ENCODE measurements at regions of chr1 and their contacts with region 1.

Region 1: DNA sequence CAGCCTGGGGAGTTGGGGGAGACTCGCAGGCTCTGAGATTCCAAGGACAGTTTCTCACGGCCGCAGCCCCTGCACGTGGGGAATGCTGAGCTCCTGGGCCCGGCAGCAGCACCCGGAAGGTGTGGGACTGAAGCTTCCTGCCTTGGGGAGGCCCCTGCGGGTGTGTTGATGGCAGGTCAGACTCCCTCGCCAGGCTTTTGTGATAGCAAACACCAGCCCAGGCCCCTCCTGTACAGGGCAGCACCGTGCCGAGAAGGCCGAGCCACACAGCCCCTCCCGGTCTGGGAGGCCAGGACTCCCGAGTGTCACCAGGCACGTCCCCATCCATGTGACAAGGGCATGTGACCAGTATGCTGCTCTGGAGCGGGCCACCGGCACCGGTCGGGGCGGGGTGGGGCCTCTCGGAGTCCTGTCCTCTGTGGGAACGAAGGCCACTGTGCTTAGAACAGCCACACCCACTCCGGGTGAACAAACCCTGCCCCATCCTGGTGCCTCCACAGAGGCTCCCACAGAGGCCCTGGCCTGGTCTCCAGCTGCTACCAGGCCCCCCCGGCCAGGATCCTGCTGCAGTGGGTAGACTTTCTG is 31.1 kb upstream of the ARHGEF16 start:
- DNase-seq: no peak
- H3K4me3 ChIP-seq: no peak overlapping the region
- H3K27ac ChIP-seq: no peak overlapping the region
- H3K4me1 ChIP-seq: no peaks in the 10 kb centered on the region
- H3K27me3 ChIP-seq: peaks cover 20% of the 10 kb centered on the region
- CTCF ChIP-seq: no peak

Region 2: DNA sequence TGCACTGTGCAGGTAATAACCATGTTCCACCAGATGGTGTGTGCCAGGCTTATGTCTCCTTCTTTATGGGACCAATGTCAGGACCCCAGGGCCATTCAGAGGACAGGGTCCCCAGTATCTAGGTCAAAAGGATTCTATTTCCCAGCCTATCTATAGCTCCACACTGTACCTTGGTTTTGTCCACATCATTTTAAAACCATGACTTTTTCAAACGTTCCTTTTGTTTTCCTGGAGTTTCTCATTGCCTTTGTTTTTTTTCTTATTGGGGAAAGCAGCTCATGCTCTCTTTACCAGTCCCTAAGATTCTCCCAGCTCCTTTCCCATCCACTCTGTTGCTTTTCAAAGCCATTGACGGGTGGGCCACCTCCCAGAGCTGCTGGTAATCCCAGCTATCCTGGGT is 934.6 kb before region 1 on chr1:
- CTCF ChIA-PET with region 1: no interaction called
- POLR2A ChIA-PET with region 1: interaction called, 13 read pairs
- intact Hi-C with region 1: no loop called
- DNase-seq: no peak
- H3K4me3 ChIP-seq: no peak overlapping the region
- H3K27ac ChIP-seq: no peak overlapping the region
- H3K4me1 ChIP-seq: no peaks in the 10 kb centered on the region
- H3K27me3 ChIP-seq: no peaks in the 10 kb centered on the region
- CTCF ChIP-seq: no peak

Region 3: GRCh38 chr1:2821966-2822620 is 601.2 kb before region 1 on chr1:
- CTCF ChIA-PET with region 1: interaction called, 6 read pairs
- POLR2A ChIA-PET with region 1: no interaction called
- intact Hi-C with region 1: loop called (anchors 10 kb)
- DNase-seq: peak; percentile 24
- H3K4me3 ChIP-seq: no peak overlapping the region
- H3K27ac ChIP-seq: no peak overlapping the region
- H3K4me1 ChIP-seq: no peaks in the 10 kb centered on the region
- H3K27me3 ChIP-seq: no peaks in the 10 kb centered on the region
- CTCF ChIP-seq: peak; percentile 58

Region 4: DNA sequence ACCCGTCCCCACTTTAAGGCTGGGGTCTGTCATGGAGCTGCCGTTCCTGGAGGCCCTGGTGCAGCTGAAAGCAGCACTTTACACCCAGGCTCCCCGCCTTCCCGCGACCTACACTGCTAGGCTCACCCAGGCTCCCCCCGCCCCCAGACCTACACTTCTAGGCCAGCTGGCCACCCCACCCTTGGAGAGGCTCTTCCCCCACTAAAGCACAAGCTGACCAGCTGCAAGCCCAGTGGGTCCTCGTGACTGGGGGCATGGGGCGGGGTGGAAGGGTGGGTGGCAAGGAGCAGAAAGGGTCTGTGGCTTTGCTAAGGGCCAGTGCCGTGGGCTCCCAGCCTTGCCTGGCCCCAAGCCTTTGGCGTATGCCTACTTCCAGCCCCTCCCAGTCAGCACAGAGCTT is 21.4 kb after region 1 on chr1:
- CTCF ChIA-PET with region 1: interaction called, 12 read pairs
- POLR2A ChIA-PET with region 1: no interaction called
- intact Hi-C with region 1: no loop called
- DNase-seq: no peak
- H3K4me3 ChIP-seq: no peak overlapping the region
- H3K27ac ChIP-seq: no peak overlapping the region
- H3K4me1 ChIP-seq: no peaks in the 10 kb centered on the region
- H3K27me3 ChIP-seq: peaks cover 40% of the 10 kb centered on the region
- CTCF ChIP-seq: no peak

Measured in A673 (cell line).